ENCODE measurements at regions of chr14 and their contacts with region 1.

Region 1: DNA sequence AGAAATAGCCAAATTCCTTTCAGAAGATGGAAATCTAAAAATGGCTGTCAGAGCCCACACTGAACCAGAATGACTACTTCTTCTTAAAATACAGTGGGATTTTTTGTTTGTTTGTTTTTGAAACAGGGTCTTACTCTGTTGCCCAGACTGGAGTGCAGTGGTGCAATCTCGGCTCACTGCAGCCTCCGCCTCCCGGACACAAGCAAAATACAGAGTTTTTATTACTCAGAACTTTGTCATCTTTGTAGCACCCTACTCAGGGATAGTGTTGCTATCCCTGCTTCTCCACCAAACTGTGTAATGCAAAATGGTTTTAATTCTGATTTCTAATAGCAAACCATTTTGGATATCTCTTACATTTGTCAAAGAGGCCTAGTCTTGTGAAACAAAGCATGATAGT is 16.4 kb downstream of the ZNF410 start:
- DNase-seq: no peak
- H3K4me3 ChIP-seq: no peak overlapping the region
- H3K27ac ChIP-seq: no peak overlapping the region
- H3K4me1 ChIP-seq: no peaks in the 10 kb centered on the region
- H3K27me3 ChIP-seq: no peaks in the 10 kb centered on the region
- CTCF ChIP-seq: no peak
- POLR2A ChIP-seq: no peak

Region 2: GRCh38 chr14:73965216-73965615 is 62.2 kb after region 1 on chr14:
- intact Hi-C with region 1: no loop called
- DNase-seq: no peak
- H3K4me3 ChIP-seq: no peak overlapping the region
- H3K27ac ChIP-seq: no peak overlapping the region
- H3K4me1 ChIP-seq: no peaks in the 10 kb centered on the region
- H3K27me3 ChIP-seq: no peaks in the 10 kb centered on the region
- CTCF ChIP-seq: no peak
- POLR2A ChIP-seq: no peak

Region 3: GRCh38 chr14:73977600-73978295 is 74.7 kb after region 1 on chr14:
- intact Hi-C with region 1: no loop called
- DNase-seq: no peak
- H3K4me3 ChIP-seq: no peak overlapping the region
- H3K27ac ChIP-seq: peak overlapping the region; percentile 7 to 35
- H3K4me1 ChIP-seq: no peaks in the 10 kb centered on the region
- H3K27me3 ChIP-seq: no peaks in the 10 kb centered on the region
- CTCF ChIP-seq: no peak
- POLR2A ChIP-seq: no peak

Region 4: DNA sequence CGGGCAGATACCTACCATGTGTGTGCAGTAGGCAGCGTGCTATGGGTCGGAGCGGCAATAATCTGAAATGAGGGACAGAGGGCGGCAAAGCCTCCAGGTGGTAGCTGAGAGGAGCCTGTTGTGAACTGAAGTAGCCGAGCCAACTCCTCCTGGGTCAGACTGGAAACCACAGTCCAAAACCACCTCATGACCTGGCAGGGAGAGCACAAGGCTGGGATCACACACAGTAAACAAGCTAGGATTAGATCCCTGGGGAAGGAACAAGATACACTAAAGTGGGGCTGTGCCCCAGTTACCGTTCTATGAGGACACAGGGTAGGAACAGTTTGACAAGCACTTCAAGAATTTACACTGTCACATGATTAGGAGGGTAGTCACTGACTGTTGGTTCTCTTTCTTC is 760.9 kb after region 1 on chr14:
- intact Hi-C with region 1: loop called (anchors 5 kb)
- DNase-seq: no peak
- H3K4me3 ChIP-seq: no peak overlapping the region
- H3K27ac ChIP-seq: peak overlapping the region; percentile 53 to 80
- H3K4me1 ChIP-seq: no peaks in the 10 kb centered on the region
- H3K27me3 ChIP-seq: no peaks in the 10 kb centered on the region
- CTCF ChIP-seq: no peak
- POLR2A ChIP-seq: no peak